ENCODE measurements at regions of chr13 and their contacts with region 1.

Region 1: GRCh38 chr13:51286135-51287002 is 53.1 kb upstream of the SERPINE3 start:
- DNase-seq: peak; percentile 10
- H3K4me3 ChIP-seq: no peak overlapping the region
- H3K27ac ChIP-seq: no peak overlapping the region
- H3K27me3 ChIP-seq: peaks cover 7% of the 10 kb centered on the region
- CTCF ChIP-seq: peak; percentile 98

Region 2: DNA sequence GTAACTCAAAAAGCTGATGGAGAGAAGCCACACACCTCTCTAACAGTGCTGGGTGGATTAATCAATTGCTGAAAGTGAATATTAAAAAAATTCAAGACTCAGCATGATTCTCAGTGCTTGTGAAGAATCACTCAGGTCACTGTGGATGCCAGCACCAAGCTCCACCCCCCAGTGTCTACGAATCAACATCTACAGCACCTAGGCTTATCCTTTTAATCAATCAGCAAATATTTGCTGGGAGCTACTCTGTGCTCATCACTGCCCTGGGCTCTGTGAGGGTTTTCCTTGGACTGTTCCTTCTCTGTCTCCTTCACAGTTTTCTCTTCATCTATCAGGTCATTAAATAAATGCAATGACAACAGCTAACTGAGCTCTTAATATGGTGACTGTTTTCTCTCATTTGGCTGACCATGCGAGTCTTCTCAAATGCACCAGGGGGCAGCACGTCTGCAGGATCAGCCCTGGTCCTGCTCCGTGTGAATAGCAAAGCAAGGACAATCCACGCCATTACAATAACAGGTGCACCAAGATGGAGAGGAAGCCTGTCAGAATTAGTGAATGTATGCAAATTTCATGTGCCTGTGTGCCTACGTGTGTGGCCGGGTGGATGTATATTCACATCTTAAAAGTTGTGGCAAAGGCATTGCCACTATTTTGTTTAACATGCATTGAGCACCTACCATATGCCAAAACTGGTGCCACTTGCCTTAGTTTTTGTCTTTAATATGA is 160.7 kb before region 1 on chr13:
- CTCF ChIA-PET with region 1: interaction called, 182 read pairs
- POLR2A ChIA-PET with region 1: no interaction called
- DNase-seq: peak; percentile 26
- H3K4me3 ChIP-seq: no peak overlapping the region
- H3K27ac ChIP-seq: no peak overlapping the region
- H3K27me3 ChIP-seq: peaks cover 7% of the 10 kb centered on the region
- CTCF ChIP-seq: peak; percentile 79

Region 3: DNA sequence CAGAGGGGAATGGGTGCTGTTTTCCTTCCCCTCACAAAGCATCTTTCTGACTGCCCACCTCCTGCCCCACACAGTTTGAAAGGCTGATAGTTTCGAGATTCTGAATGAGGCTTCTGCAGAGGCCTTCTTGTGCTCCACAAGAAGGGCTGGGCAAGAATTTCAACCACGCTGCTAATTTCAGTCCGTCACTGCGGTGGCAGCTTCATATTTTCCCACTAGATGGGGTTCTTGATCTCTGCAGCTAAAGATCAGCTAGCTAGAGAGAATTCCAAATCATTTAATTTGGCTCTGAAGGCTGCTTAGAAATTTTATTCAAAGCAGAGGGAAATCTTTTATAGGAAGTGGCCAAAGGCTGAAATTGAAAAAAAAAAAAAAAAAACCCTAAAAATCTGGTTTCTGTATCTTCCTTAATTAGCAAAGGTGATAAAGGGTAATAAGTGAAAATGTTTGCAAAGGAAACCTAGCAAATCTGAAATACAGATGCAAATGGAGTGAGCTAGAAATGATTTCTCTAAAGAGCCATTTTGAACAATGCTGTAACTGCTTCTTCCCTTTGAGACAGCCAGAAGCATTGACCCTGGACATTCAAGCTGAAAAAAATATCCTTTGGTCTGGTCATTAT is 137.3 kb before region 1 on chr13:
- CTCF ChIA-PET with region 1: interaction called, 203 read pairs
- POLR2A ChIA-PET with region 1: interaction called, 8 read pairs
- DNase-seq: peak; percentile 8
- H3K4me3 ChIP-seq: no peak overlapping the region
- H3K27ac ChIP-seq: no peak overlapping the region
- H3K27me3 ChIP-seq: peaks cover 9% of the 10 kb centered on the region
- CTCF ChIP-seq: peak; percentile 68

Region 4: DNA sequence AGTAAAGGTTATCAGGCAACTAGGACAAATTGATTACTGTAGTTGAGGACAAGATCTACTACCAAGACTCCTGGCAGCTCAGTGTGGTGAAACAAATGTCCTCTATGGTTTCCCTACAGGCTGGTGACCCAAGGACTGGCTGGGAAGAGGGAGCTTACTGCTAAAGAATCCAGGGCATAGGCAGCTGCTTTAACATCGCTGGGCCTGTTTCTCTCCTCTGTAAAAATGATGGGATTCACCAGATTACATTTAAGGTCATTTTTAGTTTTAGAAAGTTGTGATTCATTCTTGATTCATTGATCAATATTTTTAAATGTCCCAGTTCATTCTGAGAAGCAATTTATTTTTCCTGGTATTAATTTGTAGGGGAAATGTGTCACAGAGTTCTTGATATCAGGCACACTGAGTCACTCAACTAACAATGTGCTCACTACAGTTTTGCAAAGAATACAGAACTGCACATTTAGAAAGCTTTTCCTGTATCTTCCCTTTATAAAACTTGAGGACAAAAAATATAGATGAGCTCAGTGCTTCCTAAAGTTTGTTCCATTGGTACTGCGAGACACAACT is 83.8 kb before region 1 on chr13:
- CTCF ChIA-PET with region 1: interaction called, 10 read pairs
- POLR2A ChIA-PET with region 1: no interaction called
- DNase-seq: no peak
- H3K4me3 ChIP-seq: no peak overlapping the region
- H3K27ac ChIP-seq: no peak overlapping the region
- H3K27me3 ChIP-seq: peaks cover 9% of the 10 kb centered on the region
- CTCF ChIP-seq: no peak

Region 5: DNA sequence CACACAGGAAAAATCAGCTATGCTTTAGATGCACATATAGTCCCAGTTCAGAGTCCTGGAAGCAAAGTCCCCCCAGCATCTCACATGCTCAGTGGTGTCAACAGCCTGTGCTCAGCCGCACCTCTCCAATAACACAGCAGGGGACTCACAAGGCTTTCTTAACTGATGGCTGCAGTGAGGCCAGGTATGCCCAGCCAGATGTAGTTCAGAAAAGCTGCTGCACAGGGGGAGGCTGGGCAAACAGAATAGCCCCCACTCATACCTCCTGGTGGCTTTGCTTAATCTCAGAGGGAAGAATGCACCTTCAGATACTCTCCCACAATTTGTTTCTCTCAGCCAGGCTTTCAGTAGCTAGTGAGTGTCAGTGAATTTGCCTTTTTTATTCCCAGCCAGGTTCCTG is 30.8 kb before region 1 on chr13:
- CTCF ChIA-PET with region 1: interaction called, 18 read pairs
- POLR2A ChIA-PET with region 1: no interaction called
- DNase-seq: no peak
- H3K4me3 ChIP-seq: no peak overlapping the region
- H3K27ac ChIP-seq: no peak overlapping the region
- H3K27me3 ChIP-seq: peaks cover 5% of the 10 kb centered on the region
- CTCF ChIP-seq: no peak

Region 6: DNA sequence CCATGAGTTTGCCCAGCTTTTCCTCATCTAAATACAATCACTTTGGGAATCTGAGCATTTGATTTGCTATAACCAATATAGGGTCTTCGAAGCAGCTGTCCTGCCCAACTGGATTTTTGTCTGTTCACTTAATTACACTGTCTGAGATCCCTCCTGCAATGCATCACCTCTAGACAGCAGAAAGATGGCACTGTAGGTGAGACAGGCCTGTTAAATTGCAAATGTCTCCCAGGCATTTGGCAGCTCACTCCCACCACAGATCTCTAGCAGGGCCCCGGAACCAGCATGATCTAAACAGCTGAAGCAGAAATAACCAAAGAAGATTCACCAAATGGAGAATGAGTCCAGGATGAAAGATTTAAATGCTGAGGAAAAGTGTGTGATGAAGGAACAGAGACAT is 11.2 kb after region 1 on chr13:
- CTCF ChIA-PET with region 1: interaction called, 46 read pairs
- POLR2A ChIA-PET with region 1: no interaction called
- DNase-seq: no peak
- H3K4me3 ChIP-seq: no peak overlapping the region
- H3K27ac ChIP-seq: no peak overlapping the region
- H3K27me3 ChIP-seq: peaks cover 25% of the 10 kb centered on the region
- CTCF ChIP-seq: no peak

Measured in AG04450 (cell line).